ENCODE measurements at regions of chr10 and their contacts with region 1.

Region 1: GRCh38 chr10:30433730-30434272 is at the start of gene MAP3K8:
- DNase-seq: peak; percentile 91
- ATAC-seq: peak; percentile 75
- H3K4me3 Mint-ChIP-seq: peak within 1 kb of the TSS; percentile 78
- H3K27ac Mint-ChIP-seq: peak within 1 kb of the TSS; percentile 81
- H3K4me1 Mint-ChIP-seq: peaks cover 50% of the 10 kb centered on the region
- H3K27me3 Mint-ChIP-seq: peaks cover 3% of the 10 kb centered on the region
- CTCF ChIP-seq: no peak
- total RNA-seq, gene MAP3K8: 24.0 to 25.7 TPM

Region 2: DNA sequence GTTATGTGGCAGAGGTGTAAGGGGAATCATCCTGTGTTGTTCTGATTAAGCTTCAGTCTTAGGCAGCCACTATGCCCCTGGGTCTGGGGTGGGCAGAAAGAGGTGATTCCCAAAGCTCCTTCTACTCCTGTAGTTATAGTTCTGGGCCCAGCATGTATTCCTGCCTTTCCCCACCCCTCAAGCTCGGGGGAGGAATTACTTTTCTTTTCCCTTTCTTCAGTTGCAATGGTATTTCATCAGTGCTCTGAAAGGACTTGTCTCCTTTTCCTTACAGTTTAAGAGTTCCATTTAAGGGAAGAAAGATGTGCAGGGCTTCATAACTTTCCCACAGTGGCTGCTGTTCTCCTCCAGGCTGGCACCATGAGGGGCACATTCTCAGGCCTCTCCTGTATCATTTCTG is 178.9 kb before region 1 on chr10:
- CTCF ChIA-PET with region 1: no interaction called
- POLR2A ChIA-PET with region 1: no interaction called
- intact Hi-C with region 1: no loop called
- DNase-seq: no peak
- ATAC-seq: no peak
- H3K4me3 Mint-ChIP-seq: no peak overlapping the region
- H3K27ac Mint-ChIP-seq: no peak overlapping the region
- H3K4me1 Mint-ChIP-seq: no peaks in the 10 kb centered on the region
- H3K27me3 Mint-ChIP-seq: peaks cover 5% of the 10 kb centered on the region
- CTCF ChIP-seq: no peak

Region 3: GRCh38 chr10:30398788-30399187 is 35.0 kb before region 1 on chr10:
- CTCF ChIA-PET with region 1: no interaction called
- POLR2A ChIA-PET with region 1: no interaction called
- intact Hi-C with region 1: no loop called
- DNase-seq: peak; percentile 24
- ATAC-seq: peak; percentile 60
- H3K4me3 Mint-ChIP-seq: no peak overlapping the region
- H3K27ac Mint-ChIP-seq: no peak overlapping the region
- H3K4me1 Mint-ChIP-seq: peaks cover 15% of the 10 kb centered on the region
- H3K27me3 Mint-ChIP-seq: peaks cover 4% of the 10 kb centered on the region
- CTCF ChIP-seq: no peak

Region 4: DNA sequence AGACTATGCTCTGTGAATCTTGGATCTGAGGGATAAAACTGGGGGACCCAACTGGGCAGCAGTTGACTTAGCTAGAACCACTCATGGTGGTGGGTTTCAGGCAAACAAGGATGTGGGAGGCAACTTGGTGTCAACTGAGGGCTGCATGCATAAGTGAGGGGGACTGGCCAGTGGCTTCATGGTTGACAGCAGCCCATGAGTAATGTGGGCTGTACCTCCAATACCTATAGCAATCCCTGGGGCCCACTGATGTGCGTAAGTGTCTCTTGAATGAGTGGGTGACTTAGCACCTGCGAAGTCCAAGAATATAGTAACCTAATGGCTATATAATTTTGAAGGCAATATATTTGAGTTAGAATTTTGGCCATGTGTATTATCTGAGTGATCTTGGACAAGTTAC is 13.5 kb before region 1 on chr10:
- CTCF ChIA-PET with region 1: interaction called, 10 read pairs
- POLR2A ChIA-PET with region 1: interaction called, 3 read pairs
- intact Hi-C with region 1: no loop called
- DNase-seq: no peak
- ATAC-seq: no peak
- H3K4me3 Mint-ChIP-seq: no peak overlapping the region
- H3K27ac Mint-ChIP-seq: no peak overlapping the region
- H3K4me1 Mint-ChIP-seq: peaks cover 35% of the 10 kb centered on the region
- H3K27me3 Mint-ChIP-seq: no peaks in the 10 kb centered on the region
- CTCF ChIP-seq: no peak

Region 5: DNA sequence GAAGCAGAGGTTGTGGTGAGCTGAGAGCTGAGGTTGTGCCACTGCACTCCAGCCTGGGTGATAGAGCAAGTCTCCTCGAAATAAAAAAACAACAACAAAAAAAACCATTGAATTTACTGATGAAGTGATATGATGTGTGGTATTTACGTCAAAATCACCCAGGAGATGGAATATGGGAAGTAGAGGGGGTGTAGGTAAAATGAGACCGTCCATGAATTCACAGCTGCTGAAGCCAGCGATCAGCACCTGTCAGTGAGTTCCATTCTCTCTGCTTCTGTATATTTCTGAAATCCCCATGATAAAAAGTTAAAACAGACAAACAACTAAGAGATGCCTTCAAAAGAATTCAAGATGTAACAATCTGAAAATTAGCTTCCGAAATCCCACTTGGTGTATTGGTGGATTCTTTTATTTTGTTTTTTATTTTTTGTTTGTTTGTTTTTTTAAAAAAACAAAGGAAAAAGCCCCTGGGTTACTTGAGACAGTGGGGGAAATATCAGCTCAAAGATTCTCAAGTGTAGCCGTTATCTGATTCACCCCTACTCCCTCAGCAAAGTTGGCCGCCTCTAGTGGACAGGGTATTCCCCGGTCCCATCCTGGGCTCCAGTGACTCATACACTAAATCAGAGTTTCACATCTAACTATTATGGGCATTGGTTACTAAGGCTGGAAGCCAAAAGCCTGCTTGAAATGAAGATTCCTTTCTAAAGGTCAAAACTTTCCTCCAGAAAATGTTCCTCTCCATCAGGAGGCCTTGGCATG is 76.5 kb after region 1 on chr10:
- CTCF ChIA-PET with region 1: interaction called, 3 read pairs
- POLR2A ChIA-PET with region 1: interaction called, 4 read pairs
- intact Hi-C with region 1: loop called (anchors 5 kb)
- DNase-seq: peak; percentile 73
- ATAC-seq: peak; percentile 95
- H3K4me3 Mint-ChIP-seq: no peak overlapping the region
- H3K27ac Mint-ChIP-seq: peak overlapping the region; percentile 13
- H3K4me1 Mint-ChIP-seq: peaks cover 24% of the 10 kb centered on the region
- H3K27me3 Mint-ChIP-seq: no peaks in the 10 kb centered on the region
- CTCF ChIP-seq: no peak

Region 6: GRCh38 chr10:30529373-30529998 is 95.7 kb after region 1 on chr10:
- CTCF ChIA-PET with region 1: interaction called, 39 read pairs
- POLR2A ChIA-PET with region 1: interaction called, 21 read pairs
- intact Hi-C with region 1: loop called (anchors 5 kb)
- DNase-seq: peak; percentile 93
- ATAC-seq: peak; percentile 85
- H3K4me3 Mint-ChIP-seq: peak overlapping the region; percentile 75
- H3K27ac Mint-ChIP-seq: peak overlapping the region; percentile 96
- H3K4me1 Mint-ChIP-seq: peaks cover 62% of the 10 kb centered on the region
- H3K27me3 Mint-ChIP-seq: no peaks in the 10 kb centered on the region
- CTCF ChIP-seq: no peak

Region 7: DNA sequence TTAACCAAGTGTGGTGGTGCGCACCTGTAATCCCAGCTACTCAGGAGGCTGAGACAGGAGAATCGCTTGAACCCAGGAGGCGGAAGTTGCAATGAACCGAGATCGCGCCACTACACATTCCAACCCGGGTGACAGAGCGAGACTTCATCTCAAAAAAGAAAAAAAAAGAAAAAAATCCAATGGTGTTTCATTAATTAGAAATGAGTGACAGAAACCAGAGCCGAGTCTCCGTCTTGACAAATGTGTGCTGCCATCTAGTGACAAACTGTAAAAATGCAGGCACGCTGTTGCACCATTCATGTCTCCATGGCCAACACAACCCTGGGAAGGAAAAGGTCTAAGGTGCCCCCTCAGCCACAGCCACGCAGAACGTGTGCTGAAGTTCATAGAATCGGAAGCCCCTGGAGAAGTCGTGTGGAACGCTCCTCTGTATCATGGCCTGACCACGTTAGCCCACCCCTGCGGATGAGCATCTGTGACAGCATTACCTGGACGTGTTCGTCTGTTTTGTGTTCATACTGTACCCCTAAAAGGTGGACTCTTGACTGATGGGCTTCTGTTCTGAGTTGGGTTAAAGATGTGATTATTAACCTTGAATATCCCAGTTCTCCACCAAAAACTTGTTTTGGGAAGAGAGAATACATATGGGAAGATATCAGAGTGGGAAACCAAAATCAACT is 100.8 kb after region 1 on chr10:
- CTCF ChIA-PET with region 1: interaction called, 39 read pairs
- POLR2A ChIA-PET with region 1: interaction called, 21 read pairs
- intact Hi-C with region 1: loop called (anchors 5 kb)
- DNase-seq: peak; percentile 87
- ATAC-seq: peak; percentile 55
- H3K4me3 Mint-ChIP-seq: no peak overlapping the region
- H3K27ac Mint-ChIP-seq: no peak overlapping the region
- H3K4me1 Mint-ChIP-seq: peaks cover 29% of the 10 kb centered on the region
- H3K27me3 Mint-ChIP-seq: no peaks in the 10 kb centered on the region
- CTCF ChIP-seq: peak; percentile 90